MCF 10A (cell line): ENCODE measurements at regions of chr22 and their contacts with region 1.

Region 1: DNA sequence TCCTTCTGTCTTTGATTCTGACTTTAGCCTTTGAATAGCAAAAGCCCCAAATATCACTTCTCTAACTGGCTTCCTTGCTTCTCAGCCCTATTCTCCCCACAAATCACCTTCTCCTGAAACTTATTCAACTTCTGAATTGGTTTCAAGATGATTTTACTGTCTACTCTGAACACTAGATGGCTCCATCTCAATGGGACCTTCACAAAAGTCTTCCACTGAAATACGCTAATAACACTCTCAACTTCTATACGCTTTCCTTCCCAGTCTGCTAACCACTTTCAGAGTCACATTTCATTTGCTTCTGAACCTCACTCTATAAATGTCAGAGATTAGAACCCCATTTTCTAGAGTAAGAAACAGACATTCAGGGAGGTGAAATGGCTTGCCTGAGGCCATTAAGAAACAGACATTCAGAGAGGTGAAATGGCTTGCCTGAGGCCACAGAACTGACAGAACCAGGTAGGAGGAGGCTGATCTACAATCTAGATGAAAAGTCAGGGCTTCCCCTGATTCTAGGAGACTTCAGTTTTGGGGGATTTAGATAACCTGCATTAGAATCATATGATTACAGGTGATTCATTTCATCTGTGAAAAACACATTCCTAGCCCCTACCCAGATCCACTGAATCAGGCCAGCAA is 20.6 kb downstream of the MORC2 start:
- DNase-seq: peak; percentile 45
- H3K4me3 Mint-ChIP-seq: no peak overlapping the region
- H3K27ac Mint-ChIP-seq: no peak overlapping the region
- H3K4me1 Mint-ChIP-seq: no peaks in the 10 kb centered on the region
- H3K27me3 Mint-ChIP-seq: no peaks in the 10 kb centered on the region
- CTCF ChIP-seq: peak; percentile 51

Region 2: DNA sequence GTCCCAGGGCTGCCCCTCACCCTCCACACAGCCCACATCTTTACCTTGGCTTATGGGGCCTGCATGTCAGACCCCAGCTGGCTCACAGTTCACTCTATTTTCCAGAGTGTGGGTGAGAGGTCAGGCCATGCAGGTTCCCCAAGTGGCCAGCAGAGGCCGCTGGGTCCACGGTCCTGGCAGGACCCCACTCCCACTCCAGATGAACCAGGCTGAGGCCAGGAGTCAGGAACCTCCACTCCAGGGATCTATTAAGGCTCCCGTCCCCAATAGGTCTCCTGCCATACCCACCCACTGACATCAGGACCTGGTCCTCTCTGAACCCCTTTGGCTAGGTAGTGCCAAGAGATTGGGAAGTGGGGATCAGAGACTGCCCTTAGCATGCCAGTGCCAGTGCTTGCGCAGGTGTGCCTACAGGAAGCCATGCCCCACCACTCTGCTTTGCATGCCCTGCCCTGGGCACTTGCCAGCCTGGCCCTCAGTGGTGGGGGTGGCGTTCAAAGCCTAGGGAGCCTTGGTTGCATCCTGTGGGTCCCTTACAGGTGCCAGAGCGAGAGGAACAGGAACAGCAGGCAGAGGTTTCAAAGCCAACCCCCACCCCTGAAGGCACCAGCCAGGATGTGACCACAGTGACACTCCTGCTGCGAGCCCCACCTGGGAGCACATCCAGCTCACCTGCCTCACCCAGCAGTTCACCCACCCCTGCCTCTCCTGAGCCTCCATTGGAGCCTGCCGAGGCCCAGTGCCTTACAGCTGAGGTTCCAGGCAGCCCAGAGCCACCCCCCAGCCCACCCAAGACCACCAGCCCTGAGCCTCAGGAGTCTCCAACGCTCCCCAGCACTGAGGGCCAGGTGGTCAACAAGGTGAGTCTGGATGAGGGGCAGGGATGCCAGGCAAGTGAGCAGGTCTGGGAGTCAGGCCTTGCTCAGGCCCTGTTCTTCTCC is 141.5 kb after region 1 on chr22:
- CTCF ChIA-PET with region 1: interaction called, 28 read pairs
- POLR2A ChIA-PET with region 1: interaction called, 13 read pairs
- intact Hi-C with region 1: loop called (anchors 1 kb)
- DNase-seq: peak; percentile 32
- H3K4me3 Mint-ChIP-seq: no peak overlapping the region
- H3K27ac Mint-ChIP-seq: peak overlapping the region; percentile 29
- H3K4me1 Mint-ChIP-seq: peaks cover under 1% of the 10 kb centered on the region
- H3K27me3 Mint-ChIP-seq: no peaks in the 10 kb centered on the region
- CTCF ChIP-seq: peak; percentile 78